CD8-positive, alpha-beta T cell (primary cell): ENCODE measurements at regions of chr1 and their contacts with region 1.

Region 1: GRCh38 chr1:198676253-198676652 is 37.4 kb downstream of the PTPRC start:
- DNase-seq: peak in 2 of 9 experiments; percentile 60 to 79
- ATAC-seq: peak; percentile 12
- H3K4me3 ChIP-seq: peak overlapping the region in 1 of 2 experiments; percentile 0
- H3K4me3 Mint-ChIP-seq: peak overlapping the region; percentile 71
- H3K27ac ChIP-seq: peak overlapping the region; percentile 19 to 97
- H3K27ac Mint-ChIP-seq: peak overlapping the region; percentile 93
- H3K4me1 ChIP-seq: peaks cover 96% of the 10 kb centered on the region
- H3K4me1 Mint-ChIP-seq: peaks cover 87% of the 10 kb centered on the region
- H3K27me3 ChIP-seq: no peaks in the 10 kb centered on the region
- H3K27me3 Mint-ChIP-seq: no peaks in the 10 kb centered on the region
- CTCF ChIP-seq: no peak

Region 2: DNA sequence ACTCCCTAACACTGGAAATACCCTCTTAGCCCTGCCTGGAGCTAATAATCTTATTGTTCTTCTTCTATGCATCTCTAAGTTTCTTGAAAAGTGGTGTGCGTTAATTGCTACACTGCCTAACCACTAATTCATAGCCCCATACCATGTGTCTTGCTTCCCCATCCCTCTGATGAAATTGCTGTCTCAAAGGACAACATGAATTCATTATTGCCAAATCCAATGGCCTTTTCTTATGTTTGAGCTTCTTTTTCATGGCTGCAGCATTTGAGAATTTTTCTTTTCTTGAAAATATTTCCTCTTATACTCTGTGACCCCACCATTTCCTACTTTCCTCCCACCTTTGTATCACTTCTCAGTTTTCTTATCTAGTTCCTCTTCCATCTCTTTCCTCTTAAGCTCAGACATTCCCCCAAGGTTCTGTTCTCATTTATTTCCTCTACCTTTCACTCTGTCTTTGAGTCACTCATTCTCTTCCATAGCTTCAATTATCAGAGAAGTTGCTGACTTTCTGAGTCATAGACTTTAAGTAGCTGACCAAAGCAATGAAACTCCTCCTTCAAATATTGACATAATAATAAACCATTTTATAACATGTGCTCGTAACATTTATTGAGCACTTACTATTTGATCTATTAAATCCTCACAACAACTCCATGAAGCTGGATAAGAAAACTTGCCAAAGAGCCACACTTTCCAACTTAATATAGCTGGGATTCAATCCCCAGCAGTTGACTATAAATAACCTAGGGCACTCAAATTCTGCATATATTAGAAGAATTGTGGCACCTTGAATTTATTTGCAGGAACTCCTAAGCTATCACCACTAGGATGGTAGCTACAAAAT is 100.2 kb before region 1 on chr1:
- CTCF ChIA-PET with region 1: no interaction called
- POLR2A ChIA-PET with region 1: no interaction called
- intact Hi-C with region 1: no loop called
- DNase-seq: no peak
- ATAC-seq: no peak
- H3K4me3 ChIP-seq: no peak overlapping the region
- H3K4me3 Mint-ChIP-seq: no peak overlapping the region
- H3K27ac ChIP-seq: no peak overlapping the region
- H3K27ac Mint-ChIP-seq: no peak overlapping the region
- H3K4me1 ChIP-seq: no peaks in the 10 kb centered on the region
- H3K4me1 Mint-ChIP-seq: peaks cover 25% of the 10 kb centered on the region
- H3K27me3 ChIP-seq: no peaks in the 10 kb centered on the region
- H3K27me3 Mint-ChIP-seq: no peaks in the 10 kb centered on the region
- CTCF ChIP-seq: no peak

Region 3: GRCh38 chr1:198662821-198663220 is 13.4 kb before region 1 on chr1:
- CTCF ChIA-PET with region 1: interaction called, 8 read pairs
- POLR2A ChIA-PET with region 1: interaction called, 27 read pairs
- intact Hi-C with region 1: loop called in 1 of 2 experiments (anchors 2 kb)
- DNase-seq: peak in 1 of 9 experiments; percentile 41
- ATAC-seq: peak; percentile 12
- H3K4me3 ChIP-seq: peak overlapping the region; percentile 2 to 4
- H3K4me3 Mint-ChIP-seq: peak overlapping the region; percentile 78
- H3K27ac ChIP-seq: peak overlapping the region in 1 of 2 experiments; percentile 97
- H3K27ac Mint-ChIP-seq: peak overlapping the region; percentile 93
- H3K4me1 ChIP-seq: peaks cover 83% of the 10 kb centered on the region
- H3K4me1 Mint-ChIP-seq: peaks cover 85% of the 10 kb centered on the region
- H3K27me3 ChIP-seq: no peaks in the 10 kb centered on the region
- H3K27me3 Mint-ChIP-seq: no peaks in the 10 kb centered on the region
- CTCF ChIP-seq: no peak

Region 4: DNA sequence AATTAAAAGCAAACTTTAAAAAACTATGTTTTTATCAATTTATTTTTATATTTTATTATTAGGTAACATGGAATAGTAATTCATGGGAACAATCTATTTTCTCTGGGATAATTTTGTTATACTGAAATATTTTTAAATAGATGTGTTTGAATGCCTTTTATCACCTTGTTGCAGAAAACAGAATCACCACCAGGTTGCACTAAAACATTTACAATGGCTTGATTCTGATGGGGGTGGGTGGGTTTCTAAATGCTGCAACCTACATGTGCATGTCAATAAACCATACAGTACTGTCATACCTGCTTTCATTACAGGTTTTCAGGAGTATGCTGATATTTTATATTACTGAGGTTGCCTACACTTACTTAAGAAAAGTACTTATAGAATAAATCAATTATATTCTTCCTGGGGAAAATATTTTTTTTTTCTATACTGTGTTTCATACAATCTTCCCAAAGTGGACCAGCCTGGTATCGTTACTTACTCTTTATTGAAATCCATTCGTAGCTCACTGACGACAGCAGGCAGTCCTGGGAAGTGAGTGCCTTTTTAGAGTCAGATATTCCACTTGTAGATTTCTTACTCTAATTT is 95.4 kb after region 1 on chr1:
- CTCF ChIA-PET with region 1: no interaction called
- POLR2A ChIA-PET with region 1: no interaction called
- intact Hi-C with region 1: no loop called
- DNase-seq: peak in 2 of 9 experiments; percentile 38 to 61
- ATAC-seq: no peak
- H3K4me3 ChIP-seq: no peak overlapping the region
- H3K4me3 Mint-ChIP-seq: no peak overlapping the region
- H3K27ac ChIP-seq: no peak overlapping the region
- H3K27ac Mint-ChIP-seq: no peak overlapping the region
- H3K4me1 ChIP-seq: no peaks in the 10 kb centered on the region
- H3K4me1 Mint-ChIP-seq: peaks cover 2% of the 10 kb centered on the region
- H3K27me3 ChIP-seq: no peaks in the 10 kb centered on the region
- H3K27me3 Mint-ChIP-seq: no peaks in the 10 kb centered on the region
- CTCF ChIP-seq: peak; percentile 65

Region 5: DNA sequence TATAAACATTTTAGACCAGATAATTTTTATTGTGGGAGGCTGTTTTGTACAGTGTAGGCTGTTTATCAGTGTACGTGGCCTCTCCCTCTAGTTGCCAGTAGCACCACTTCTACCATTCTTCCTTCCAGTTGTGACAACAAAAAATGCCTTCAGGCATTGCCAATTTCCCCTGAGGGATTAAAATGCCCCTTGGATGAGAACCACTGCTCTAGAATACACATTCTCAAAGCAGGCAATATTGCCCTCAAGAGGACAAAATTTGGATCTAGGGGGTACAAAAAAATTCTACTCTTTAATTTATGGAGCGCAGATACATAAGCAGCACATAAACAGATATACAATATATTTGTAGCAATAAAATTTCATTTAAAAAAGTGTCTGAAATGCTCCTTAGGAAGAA is 637.2 kb after region 1 on chr1:
- CTCF ChIA-PET with region 1: no interaction called
- POLR2A ChIA-PET with region 1: no interaction called
- intact Hi-C with region 1: no loop called
- DNase-seq: no peak
- ATAC-seq: no peak
- H3K4me3 ChIP-seq: no peak overlapping the region
- H3K4me3 Mint-ChIP-seq: no peak overlapping the region
- H3K27ac ChIP-seq: no peak overlapping the region
- H3K27ac Mint-ChIP-seq: no peak overlapping the region
- H3K4me1 ChIP-seq: no peaks in the 10 kb centered on the region
- H3K4me1 Mint-ChIP-seq: no peaks in the 10 kb centered on the region
- H3K27me3 ChIP-seq: no peaks in the 10 kb centered on the region
- H3K27me3 Mint-ChIP-seq: no peaks in the 10 kb centered on the region
- CTCF ChIP-seq: no peak